Calu3 (cell line): ENCODE measurements at regions of chr6 and their contacts with region 1.

Region 1: GRCh38 chr6:3929281-3929798 is 80.2 kb downstream of the FAM50B start:
- DNase-seq: no peak
- H3K4me3 Mint-ChIP-seq: no peak overlapping the region
- H3K27ac Mint-ChIP-seq: no peak overlapping the region
- H3K4me1 Mint-ChIP-seq: peaks cover 16% of the 10 kb centered on the region
- H3K27me3 Mint-ChIP-seq: no peaks in the 10 kb centered on the region
- CTCF ChIP-seq: no peak

Region 2: DNA sequence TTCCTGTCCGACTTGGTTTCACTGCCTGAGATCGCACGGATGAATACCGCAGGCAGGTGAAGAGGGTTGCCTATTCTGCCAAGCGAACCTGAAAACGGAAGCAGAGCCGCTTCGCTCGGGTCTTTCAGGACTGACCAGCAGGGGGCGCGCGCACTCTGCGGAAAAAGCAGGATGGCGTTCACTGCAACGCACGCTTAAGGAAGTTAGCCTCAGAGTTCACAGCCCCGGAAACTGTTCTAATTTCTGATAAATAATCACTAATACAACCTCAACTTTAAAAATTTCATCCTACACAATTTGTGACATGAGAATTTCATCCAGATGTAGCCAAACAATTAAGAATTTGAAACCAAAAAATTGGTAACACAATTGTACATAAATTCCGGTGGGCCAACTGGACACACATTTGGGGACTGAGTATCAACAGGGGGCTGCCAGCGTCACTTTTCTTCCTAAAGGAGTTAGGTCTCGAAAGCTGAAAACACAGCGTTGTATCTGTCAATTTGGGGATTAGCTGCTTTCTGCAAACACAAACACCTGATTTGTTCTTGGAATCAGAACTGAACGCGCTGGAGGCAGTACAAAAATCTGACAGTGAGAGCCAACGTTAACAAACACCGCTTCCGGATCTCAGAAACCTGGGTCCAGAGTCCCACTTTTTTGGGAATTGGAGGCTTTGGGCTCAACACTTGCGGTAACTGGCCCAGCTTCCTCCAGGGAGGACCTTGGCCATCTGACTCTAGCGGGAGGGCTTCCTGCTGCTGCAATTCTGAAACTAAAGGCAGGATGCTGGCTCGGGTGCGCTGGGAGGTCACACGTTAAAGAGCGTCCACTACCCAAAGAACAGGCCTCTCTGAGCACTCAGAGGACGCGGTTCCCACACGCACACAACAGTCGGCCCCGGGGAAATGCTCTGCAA is 186.7 kb before region 1 on chr6:
- CTCF ChIA-PET with region 1: interaction called, 3 read pairs
- intact Hi-C with region 1: loop called (anchors 2 kb)
- DNase-seq: peak; percentile 87
- H3K4me3 Mint-ChIP-seq: peak overlapping the region; percentile 55
- H3K27ac Mint-ChIP-seq: peak overlapping the region; percentile 85
- H3K4me1 Mint-ChIP-seq: peaks cover 36% of the 10 kb centered on the region
- H3K27me3 Mint-ChIP-seq: no peaks in the 10 kb centered on the region
- CTCF ChIP-seq: peak; percentile 76

Region 3: GRCh38 chr6:3835055-3835731 is 94.1 kb before region 1 on chr6:
- CTCF ChIA-PET with region 1: interaction called, 6 read pairs
- intact Hi-C with region 1: loop called (anchors 5 kb)
- DNase-seq: peak; percentile 16
- H3K4me3 Mint-ChIP-seq: no peak overlapping the region
- H3K27ac Mint-ChIP-seq: no peak overlapping the region
- H3K4me1 Mint-ChIP-seq: peaks cover 12% of the 10 kb centered on the region
- H3K27me3 Mint-ChIP-seq: no peaks in the 10 kb centered on the region
- CTCF ChIP-seq: no peak

Region 4: DNA sequence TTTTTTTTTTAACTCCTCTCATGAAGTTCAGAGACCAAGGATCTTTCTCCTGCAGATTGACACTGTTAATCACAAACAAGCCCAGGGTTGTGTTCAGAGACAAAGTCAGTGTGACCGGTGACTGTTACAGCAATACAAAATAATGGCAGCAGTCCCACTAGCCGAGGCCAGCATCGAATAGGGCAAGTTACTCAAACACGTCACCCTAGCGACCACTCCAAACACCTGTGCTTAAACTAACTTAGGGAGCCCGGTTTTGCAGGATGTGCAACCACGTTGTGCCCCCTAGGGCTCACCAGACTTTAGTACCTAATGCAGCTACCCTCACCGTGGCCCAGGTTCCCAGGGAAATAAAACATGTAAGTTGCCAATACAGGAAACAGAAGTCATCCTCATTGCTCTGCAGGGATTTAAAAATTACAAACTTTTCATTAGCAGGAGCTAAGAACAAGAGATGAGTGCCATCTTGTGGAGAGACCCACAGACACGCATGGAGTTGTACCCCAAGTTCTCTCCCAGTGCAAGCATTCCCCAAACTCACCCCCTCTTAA is 42.1 kb before region 1 on chr6:
- CTCF ChIA-PET with region 1: interaction called, 7 read pairs
- intact Hi-C with region 1: loop called (anchors 5 kb)
- DNase-seq: peak; percentile 24
- H3K4me3 Mint-ChIP-seq: no peak overlapping the region
- H3K27ac Mint-ChIP-seq: peak overlapping the region; percentile 47
- H3K4me1 Mint-ChIP-seq: peaks cover 23% of the 10 kb centered on the region
- H3K27me3 Mint-ChIP-seq: no peaks in the 10 kb centered on the region
- CTCF ChIP-seq: no peak

Region 5: GRCh38 chr6:3990692-3991501 is 61.6 kb after region 1 on chr6:
- CTCF ChIA-PET with region 1: interaction called, 4 read pairs
- intact Hi-C with region 1: loop called (anchors 2 kb)
- DNase-seq: peak; percentile 85
- H3K4me3 Mint-ChIP-seq: peak overlapping the region; percentile 60
- H3K27ac Mint-ChIP-seq: peak overlapping the region; percentile 54
- H3K4me1 Mint-ChIP-seq: peaks cover 59% of the 10 kb centered on the region
- H3K27me3 Mint-ChIP-seq: no peaks in the 10 kb centered on the region
- CTCF ChIP-seq: peak; percentile 74